HCT116 (cell line): ENCODE measurements at regions of chr7 and their contacts with region 1.

Region 1: GRCh38 chr7:79434098-79434497 is 19.4 kb downstream of the MAGI2 start:
- DNase-seq: no peak
- ATAC-seq: no peak
- H3K4me3 ChIP-seq: no peak overlapping the region
- H3K27ac ChIP-seq: no peak overlapping the region
- H3K4me1 ChIP-seq: no peaks in the 10 kb centered on the region
- H3K27me3 ChIP-seq: no peaks in the 10 kb centered on the region
- CTCF ChIP-seq: no peak
- POLR2A ChIP-seq: no peak
- RAD21 ChIP-seq: no peak

Region 2: GRCh38 chr7:79489371-79489770 is 55.3 kb after region 1 on chr7:
- CTCF ChIA-PET with region 1: no interaction called
- POLR2A ChIA-PET with region 1: no interaction called
- RAD21 ChIA-PET with region 1: no interaction called
- intact Hi-C with region 1: loop called (anchors 5 kb)
- DNase-seq: no peak
- ATAC-seq: no peak
- H3K4me3 ChIP-seq: no peak overlapping the region
- H3K27ac ChIP-seq: no peak overlapping the region
- H3K4me1 ChIP-seq: no peaks in the 10 kb centered on the region
- H3K27me3 ChIP-seq: no peaks in the 10 kb centered on the region
- CTCF ChIP-seq: no peak
- POLR2A ChIP-seq: no peak
- RAD21 ChIP-seq: no peak